ENCODE measurements at regions of chr20 and their contacts with region 1.

Region 1: DNA sequence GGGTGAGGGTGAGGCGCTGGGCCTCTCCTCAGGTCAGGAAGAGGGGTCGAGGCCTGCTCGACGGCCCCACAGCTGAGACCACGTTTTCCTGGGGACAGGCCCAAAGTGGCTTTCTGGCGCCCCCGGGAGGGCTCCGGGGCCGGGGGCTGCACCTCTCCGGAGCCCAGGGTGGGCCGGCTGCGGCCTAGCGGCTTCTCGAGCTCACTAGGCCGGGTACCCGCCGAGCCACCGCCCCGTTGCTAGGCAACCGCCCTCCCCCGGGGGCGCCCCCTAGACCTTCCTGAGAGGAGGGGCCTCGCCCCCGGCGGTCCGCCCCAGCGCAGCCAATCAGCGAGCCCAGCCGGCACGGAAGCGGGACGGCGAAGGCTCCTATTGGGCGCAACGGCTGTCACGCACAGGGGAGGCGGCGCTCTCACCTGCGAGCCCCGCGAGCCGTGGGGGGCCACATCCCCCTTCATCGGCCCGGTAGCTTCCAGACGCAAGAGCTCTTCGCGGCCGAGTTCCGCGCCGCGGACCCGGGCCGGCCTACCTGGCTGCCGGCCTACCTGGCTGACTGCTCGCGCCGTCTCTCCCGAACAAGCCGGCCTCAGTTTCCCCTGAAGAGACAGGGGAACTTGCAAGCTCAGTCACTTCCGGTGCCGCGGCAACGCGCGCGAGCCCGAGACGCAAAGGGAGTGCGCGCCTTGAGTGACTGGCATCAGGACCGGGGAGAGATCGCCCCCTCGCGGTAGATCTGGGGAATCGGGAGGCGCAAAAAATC is 831 bp upstream of the BCL2L1 start:
- DNase-seq: peak; percentile 86 to 99
- H3K4me3 ChIP-seq: peak overlapping the region; percentile 88
- H3K27ac ChIP-seq: peak overlapping the region; percentile 99
- H3K4me1 ChIP-seq: peaks cover 19% of the 10 kb centered on the region
- H3K27me3 ChIP-seq: no peaks in the 10 kb centered on the region
- CTCF ChIP-seq: peak; percentile 94

Region 2: GRCh38 chr20:31630187-31630790 is 93.2 kb before region 1 on chr20:
- CTCF ChIA-PET with region 1: interaction called, 28 read pairs
- POLR2A ChIA-PET with region 1: interaction called, 3 read pairs
- intact Hi-C with region 1: loop called (anchors 1 kb)
- DNase-seq: no peak
- H3K4me3 ChIP-seq: no peak overlapping the region
- H3K27ac ChIP-seq: no peak overlapping the region
- H3K4me1 ChIP-seq: no peaks in the 10 kb centered on the region
- H3K27me3 ChIP-seq: no peaks in the 10 kb centered on the region
- CTCF ChIP-seq: no peak

Region 3: DNA sequence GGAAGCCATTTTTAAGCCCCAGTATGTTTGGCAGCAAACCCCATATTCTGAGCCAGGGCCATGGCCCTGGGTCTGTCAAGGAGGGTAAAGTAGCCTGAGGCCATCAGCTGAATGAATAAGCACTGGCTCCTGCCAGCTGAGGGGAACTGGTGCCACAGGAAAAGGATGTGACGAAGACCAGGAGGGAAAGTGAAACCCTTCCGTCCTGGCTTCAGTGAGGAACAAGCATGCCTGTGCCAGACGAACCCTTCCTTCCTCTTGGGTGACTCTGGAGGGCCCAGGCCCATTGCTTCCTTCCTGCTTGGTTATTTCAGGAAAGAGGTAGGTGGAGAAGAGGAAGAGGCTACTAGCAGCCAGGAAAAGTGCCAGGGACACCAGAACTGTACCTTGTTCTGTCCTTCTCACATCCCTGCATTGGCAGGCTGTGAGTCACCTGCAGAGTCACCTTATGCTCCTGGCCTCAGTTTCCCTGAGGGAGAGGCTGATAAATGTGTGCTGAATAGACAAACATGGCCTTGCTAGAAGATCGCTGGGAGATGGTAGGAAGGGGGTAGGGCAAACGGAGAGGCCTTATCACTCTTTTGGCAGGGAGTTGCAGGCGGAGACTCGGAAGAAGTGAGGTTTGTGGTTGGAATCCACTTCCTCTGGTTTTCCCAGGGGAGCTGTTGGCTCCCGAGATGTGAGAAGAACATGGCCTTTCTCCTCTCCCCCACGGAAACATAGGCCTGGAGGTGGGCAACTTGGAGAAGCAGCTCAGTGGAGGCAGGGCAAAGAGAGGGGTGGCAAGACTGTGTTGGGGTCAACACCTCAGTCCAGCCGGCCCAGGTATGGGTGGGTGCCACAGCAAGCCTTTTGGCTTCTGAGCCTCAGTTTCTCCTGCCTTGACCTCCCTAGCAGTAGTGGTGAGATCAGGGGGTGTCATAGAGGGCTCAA is 48.3 kb before region 1 on chr20:
- CTCF ChIA-PET with region 1: interaction called, 10 read pairs
- POLR2A ChIA-PET with region 1: interaction called, 6 read pairs
- intact Hi-C with region 1: loop called (anchors 1 kb)
- DNase-seq: peak in 1 of 2 experiments; percentile 53
- H3K4me3 ChIP-seq: no peak overlapping the region
- H3K27ac ChIP-seq: peak overlapping the region; percentile 24; the same call in 1 of the 2 replicates
- H3K4me1 ChIP-seq: peaks cover 27% of the 10 kb centered on the region
- H3K27me3 ChIP-seq: no peaks in the 10 kb centered on the region
- CTCF ChIP-seq: no peak

Region 4: DNA sequence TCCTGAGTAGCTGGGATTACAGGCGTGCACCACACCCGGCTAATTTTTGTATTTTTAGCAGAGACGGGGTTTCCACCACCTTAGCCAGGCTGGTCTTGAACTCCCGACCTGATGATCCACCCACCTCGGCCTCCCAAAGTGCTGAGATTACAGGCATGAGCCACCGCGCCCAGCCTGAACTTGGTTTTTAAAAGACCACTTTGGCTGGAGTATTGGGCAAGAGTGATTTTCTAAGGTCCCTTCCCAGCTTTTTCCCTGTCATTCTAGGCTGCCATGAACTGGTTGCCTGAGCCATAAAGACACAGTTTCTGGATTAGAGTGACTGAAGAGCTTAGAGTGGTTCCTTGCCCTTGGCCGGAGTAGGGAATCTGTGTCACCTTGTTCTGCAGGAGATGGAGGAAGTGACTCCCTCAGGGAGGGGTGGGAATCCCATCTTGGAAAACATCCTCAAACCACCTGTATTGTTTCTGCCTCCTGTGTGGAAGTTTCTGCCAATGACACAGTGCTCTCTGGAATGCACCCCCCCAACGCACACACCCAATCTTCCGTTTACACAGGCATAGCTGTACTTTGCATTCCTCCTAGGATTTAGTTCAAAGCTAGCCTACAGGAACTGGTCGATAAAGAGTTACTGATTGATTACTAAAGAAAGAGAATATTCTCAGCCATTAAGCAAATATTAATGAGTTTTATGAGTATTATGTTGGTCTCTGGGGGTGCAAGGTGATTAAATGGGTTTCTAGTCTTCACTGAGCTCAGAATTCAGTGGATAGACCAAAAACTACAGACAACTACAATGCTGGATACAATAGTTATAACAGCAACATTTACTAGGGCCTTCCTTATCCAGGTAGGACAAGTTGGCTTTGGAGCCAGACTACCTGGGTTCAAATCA is 19.0 kb before region 1 on chr20:
- CTCF ChIA-PET with region 1: interaction called, 34 read pairs
- POLR2A ChIA-PET with region 1: interaction called, 28 read pairs
- intact Hi-C with region 1: loop called (anchors 1 kb)
- DNase-seq: peak; percentile 92 to 98
- H3K4me3 ChIP-seq: peak overlapping the region; percentile 29; the same call in 1 of the 2 replicates
- H3K27ac ChIP-seq: peak overlapping the region; percentile 95
- H3K4me1 ChIP-seq: peaks cover 90% of the 10 kb centered on the region
- H3K27me3 ChIP-seq: no peaks in the 10 kb centered on the region
- CTCF ChIP-seq: no peak

Region 5: GRCh38 chr20:31764641-31765305 is 41.3 kb after region 1 on chr20:
- CTCF ChIA-PET with region 1: no interaction called
- POLR2A ChIA-PET with region 1: no interaction called
- intact Hi-C with region 1: no loop called
- DNase-seq: no peak
- H3K4me3 ChIP-seq: no peak overlapping the region
- H3K27ac ChIP-seq: no peak overlapping the region
- H3K4me1 ChIP-seq: no peaks in the 10 kb centered on the region
- H3K27me3 ChIP-seq: no peaks in the 10 kb centered on the region
- CTCF ChIP-seq: no peak

Region 6: GRCh38 chr20:31842471-31843157 is 119.1 kb after region 1 on chr20:
- CTCF ChIA-PET with region 1: no interaction called
- POLR2A ChIA-PET with region 1: no interaction called
- intact Hi-C with region 1: loop called (anchors 5 kb)
- DNase-seq: peak in 1 of 2 experiments; percentile 47
- H3K4me3 ChIP-seq: no peak overlapping the region
- H3K27ac ChIP-seq: no peak overlapping the region
- H3K4me1 ChIP-seq: peaks cover 9% of the 10 kb centered on the region
- H3K27me3 ChIP-seq: peaks cover 1% of the 10 kb centered on the region; the same call in 1 of the 2 replicates
- CTCF ChIP-seq: no peak

Measured in PC-9 (cell line).